Activated B cell treated with CpG ODN at 0.5 μM for 24 hours (primary cell): ENCODE measurements at regions of chr6 and their contacts with region 1.

Region 1: DNA sequence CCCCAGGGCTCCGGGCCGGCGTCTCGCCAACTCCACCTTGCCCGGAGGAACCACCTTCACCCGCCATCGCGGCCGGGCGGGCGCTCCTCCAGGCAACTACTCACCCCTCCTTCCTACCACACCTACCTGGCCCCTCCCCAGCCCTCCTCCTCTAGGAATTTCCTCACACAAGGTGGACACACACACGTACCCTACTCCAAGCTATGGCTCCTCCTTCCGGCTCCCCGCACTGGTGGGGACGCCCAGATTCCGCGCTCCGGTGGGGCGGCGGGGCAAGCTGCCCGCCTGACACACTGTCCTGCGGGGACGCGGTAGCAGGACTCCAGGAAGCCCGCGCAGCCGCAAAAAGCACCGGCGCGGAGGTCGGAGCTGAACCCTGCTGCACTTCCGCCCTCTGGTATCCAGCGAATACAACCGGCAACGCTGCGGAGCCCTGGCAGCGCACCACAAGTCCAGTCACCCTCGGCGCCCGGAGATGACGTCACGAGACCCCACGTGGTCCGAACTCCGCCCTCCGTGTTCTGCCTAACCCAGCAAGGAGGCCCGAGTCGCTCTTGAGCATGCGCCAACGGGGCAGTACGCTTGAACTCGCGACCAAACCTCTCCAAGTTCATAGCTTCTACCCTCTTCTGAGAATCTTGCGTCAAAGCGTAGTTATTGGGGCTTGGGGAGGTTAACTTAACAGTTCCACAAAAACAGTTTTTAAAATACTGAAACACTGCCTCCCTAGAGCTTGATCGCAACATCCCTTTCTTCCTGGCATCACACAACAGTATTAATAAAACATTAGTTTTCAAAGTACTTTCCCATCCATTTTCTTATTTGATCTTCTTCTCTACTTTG is at the start of gene ATG5:
- DNase-seq: peak; percentile 99
- ATAC-seq: peak; percentile 93
- H3K4me3 Mint-ChIP-seq: peak within 1 kb of the TSS; percentile 99
- H3K27ac Mint-ChIP-seq: peak within 1 kb of the TSS; percentile 94
- H3K4me1 Mint-ChIP-seq: peaks cover 42% of the 10 kb centered on the region
- H3K27me3 Mint-ChIP-seq: peaks cover 1% of the 10 kb centered on the region
- CTCF ChIP-seq: no peak
- total RNA-seq, gene ATG5: 29.7 and 30.3 TPM in 2 replicates

Region 2: GRCh38 chr6:105880030-105880492 is 445.5 kb before region 1 on chr6:
- CTCF ChIA-PET with region 1: no interaction called
- POLR2A ChIA-PET with region 1: no interaction called
- intact Hi-C with region 1: loop called (anchors 5 kb)
- DNase-seq: no peak
- ATAC-seq: peak; percentile 63
- H3K4me3 Mint-ChIP-seq: peak overlapping the region; percentile 52
- H3K27ac Mint-ChIP-seq: peak overlapping the region; percentile 61
- H3K4me1 Mint-ChIP-seq: peaks cover 66% of the 10 kb centered on the region
- H3K27me3 Mint-ChIP-seq: no peaks in the 10 kb centered on the region
- CTCF ChIP-seq: no peak

Region 3: GRCh38 chr6:106309766-106310373 is 15.7 kb before region 1 on chr6:
- CTCF ChIA-PET with region 1: no interaction called
- POLR2A ChIA-PET with region 1: no interaction called
- intact Hi-C with region 1: loop called (anchors 1 kb)
- DNase-seq: no peak
- ATAC-seq: no peak
- H3K4me3 Mint-ChIP-seq: no peak overlapping the region
- H3K27ac Mint-ChIP-seq: no peak overlapping the region
- H3K4me1 Mint-ChIP-seq: peaks cover 17% of the 10 kb centered on the region
- H3K27me3 Mint-ChIP-seq: no peaks in the 10 kb centered on the region
- CTCF ChIP-seq: no peak

Region 4: GRCh38 chr6:106629103-106629858 is 303.7 kb after region 1 on chr6 and contains the starts of genes QRSL1 and RTN4IP1:
- CTCF ChIA-PET with region 1: no interaction called
- POLR2A ChIA-PET with region 1: no interaction called
- intact Hi-C with region 1: loop called (anchors 1 kb)
- DNase-seq: peak; percentile 74
- ATAC-seq: peak; percentile 84
- H3K4me3 Mint-ChIP-seq: peak within 1 kb of the TSS; percentile 93
- H3K27ac Mint-ChIP-seq: peak within 1 kb of the TSS; percentile 96
- H3K4me1 Mint-ChIP-seq: peaks cover 72% of the 10 kb centered on the region
- H3K27me3 Mint-ChIP-seq: no peaks in the 10 kb centered on the region
- CTCF ChIP-seq: no peak
- total RNA-seq, gene QRSL1: 28.4 and 31.1 TPM in 2 replicates
- total RNA-seq, gene RTN4IP1: 9.9 and 11.2 TPM in 2 replicates

Region 5: GRCh38 chr6:107033126-107033525 is 707.6 kb after region 1 on chr6:
- CTCF ChIA-PET with region 1: no interaction called
- POLR2A ChIA-PET with region 1: no interaction called
- intact Hi-C with region 1: loop called (anchors 1 kb)
- DNase-seq: no peak
- ATAC-seq: no peak
- H3K4me3 Mint-ChIP-seq: no peak overlapping the region
- H3K27ac Mint-ChIP-seq: no peak overlapping the region
- H3K4me1 Mint-ChIP-seq: peaks cover 21% of the 10 kb centered on the region
- H3K27me3 Mint-ChIP-seq: no peaks in the 10 kb centered on the region
- CTCF ChIP-seq: no peak